Activated CD4-positive, alpha-beta T cell treated with anti-CD3 and anti-CD28 coated beads for 36 hours (primary cell): ENCODE measurements at regions of chr13 and their contacts with region 1.

Region 1: DNA sequence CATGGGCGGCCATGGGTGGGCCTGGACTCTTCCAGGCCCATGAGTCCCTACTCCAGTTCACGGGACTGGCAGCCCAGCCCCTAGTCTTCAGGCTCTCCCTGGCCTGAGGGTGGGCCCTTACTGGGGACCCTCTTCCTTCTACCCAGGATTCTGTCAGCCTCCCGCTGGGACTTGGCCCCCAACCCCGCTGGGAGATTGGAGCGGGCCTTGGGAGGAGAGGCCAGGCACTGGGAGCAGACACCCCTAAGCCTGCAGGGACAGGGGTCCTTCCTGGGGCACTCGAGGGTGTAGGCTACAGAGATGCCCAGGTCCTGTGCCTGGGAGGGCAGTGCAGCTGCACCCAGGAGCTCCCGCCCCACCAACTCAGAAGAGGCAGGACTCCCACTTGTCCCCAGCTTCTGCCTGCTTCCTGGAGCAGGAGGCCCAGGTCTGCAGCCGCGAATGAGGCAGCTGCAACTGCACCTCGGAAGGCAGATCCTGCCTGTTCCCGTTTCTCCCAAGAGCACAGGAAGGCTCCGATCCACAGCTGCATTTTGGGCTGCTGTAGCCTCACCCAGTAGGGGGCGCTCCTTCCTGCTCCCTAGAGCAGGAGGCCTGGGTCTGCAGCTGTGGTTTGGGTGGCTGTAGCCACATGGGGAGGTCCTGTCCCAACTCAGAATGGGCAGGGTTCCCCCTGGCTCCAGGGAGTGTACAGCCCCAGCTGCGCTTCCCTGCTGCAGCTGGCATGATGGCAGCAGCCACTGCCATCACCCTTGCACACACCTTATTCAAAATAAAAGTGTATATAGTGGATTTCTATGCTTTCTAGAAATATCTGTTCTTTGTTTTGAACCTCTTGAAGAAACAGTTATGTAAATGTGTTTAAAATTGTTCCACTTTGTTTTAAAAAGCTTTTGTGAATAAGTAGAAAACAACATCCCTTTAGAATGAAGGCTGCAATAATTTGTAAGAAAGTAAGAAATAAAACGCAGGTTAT is 46.8 kb downstream of the TEX26 start:
- DNase-seq: peak; percentile 75
- ATAC-seq: no peak
- H3K4me3 Mint-ChIP-seq: no peak overlapping the region
- H3K27ac Mint-ChIP-seq: no peak overlapping the region
- H3K4me1 Mint-ChIP-seq: no peaks in the 10 kb centered on the region
- H3K27me3 Mint-ChIP-seq: peaks cover 14% of the 10 kb centered on the region

Region 2: GRCh38 chr13:30968846-30969245 is 10.4 kb before region 1 on chr13:
- CTCF ChIA-PET with region 1: interaction called, 19 read pairs
- POLR2A ChIA-PET with region 1: no interaction called
- intact Hi-C with region 1: no loop called
- DNase-seq: no peak
- ATAC-seq: no peak
- H3K4me3 Mint-ChIP-seq: no peak overlapping the region
- H3K27ac Mint-ChIP-seq: no peak overlapping the region
- H3K4me1 Mint-ChIP-seq: no peaks in the 10 kb centered on the region
- H3K27me3 Mint-ChIP-seq: peaks cover 36% of the 10 kb centered on the region